ENCODE measurements at regions of chr11 and their contacts with region 1.

Region 1: DNA sequence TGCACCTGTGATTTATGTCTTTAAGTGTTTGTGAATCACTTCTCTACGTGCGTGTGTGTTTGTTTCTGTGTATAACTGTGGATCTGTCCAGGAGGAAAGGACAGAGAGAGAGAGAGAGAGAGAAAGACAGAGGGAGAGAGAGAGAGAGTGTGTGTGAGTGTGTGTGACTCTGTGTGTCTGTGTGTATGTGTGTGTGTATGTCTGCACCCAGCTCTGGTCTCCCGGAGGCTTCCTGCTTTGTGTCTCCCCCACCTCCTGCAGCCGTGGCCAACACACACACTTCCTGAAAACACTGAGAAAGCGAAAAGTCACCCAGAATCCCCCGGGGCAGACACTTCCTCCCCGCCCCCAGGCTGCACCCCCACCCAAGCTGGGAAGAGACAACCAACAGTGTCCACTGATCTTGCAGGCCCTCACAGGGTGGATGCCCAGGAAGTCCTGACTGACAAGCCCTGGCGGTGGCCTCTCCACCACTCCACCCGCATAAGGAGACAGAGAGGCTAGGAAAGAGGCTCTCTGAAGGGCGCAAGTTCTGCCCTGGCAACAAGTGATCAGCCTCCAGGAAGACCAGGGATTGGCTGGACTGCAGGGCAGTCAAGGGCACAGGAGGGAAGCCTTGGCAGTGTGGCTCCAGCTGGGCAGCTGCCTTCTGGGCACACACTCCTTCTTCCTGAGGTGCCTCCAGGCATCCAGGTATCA is 30.0 kb downstream of the ARAP1 start:
- DNase-seq: peak; percentile 93
- ATAC-seq: peak; percentile 92
- H3K4me3 Mint-ChIP-seq: peak overlapping the region; percentile 99
- H3K27ac Mint-ChIP-seq: peak overlapping the region; percentile 99
- H3K4me1 Mint-ChIP-seq: peaks cover 59% of the 10 kb centered on the region
- H3K27me3 Mint-ChIP-seq: no peaks in the 10 kb centered on the region

Region 2: GRCh38 chr11:72743321-72744221 is 21.4 kb after region 1 on chr11:
- CTCF ChIA-PET with region 1: interaction called, 13 read pairs
- DNase-seq: no peak
- ATAC-seq: no peak
- H3K4me3 Mint-ChIP-seq: no peak overlapping the region
- H3K27ac Mint-ChIP-seq: peak overlapping the region; percentile 20
- H3K4me1 Mint-ChIP-seq: peaks cover 53% of the 10 kb centered on the region
- H3K27me3 Mint-ChIP-seq: no peaks in the 10 kb centered on the region

Region 3: GRCh38 chr11:72787216-72788104 is 65.3 kb after region 1 on chr11:
- CTCF ChIA-PET with region 1: interaction called, 121 read pairs
- DNase-seq: no peak
- ATAC-seq: peak; percentile 46
- H3K4me3 Mint-ChIP-seq: no peak overlapping the region
- H3K27ac Mint-ChIP-seq: peak overlapping the region; percentile 83
- H3K4me1 Mint-ChIP-seq: peaks cover 24% of the 10 kb centered on the region
- H3K27me3 Mint-ChIP-seq: no peaks in the 10 kb centered on the region

Region 4: GRCh38 chr11:72814286-72815109 is 92.3 kb after region 1 on chr11 and contains the start of gene ATG16L2:
- CTCF ChIA-PET with region 1: interaction called, 63 read pairs
- DNase-seq: peak; percentile 92
- ATAC-seq: peak; percentile 75
- H3K4me3 Mint-ChIP-seq: peak within 1 kb of the TSS; percentile 100
- H3K27ac Mint-ChIP-seq: peak within 1 kb of the TSS; percentile 99
- H3K4me1 Mint-ChIP-seq: peaks cover 52% of the 10 kb centered on the region
- H3K27me3 Mint-ChIP-seq: no peaks in the 10 kb centered on the region
- total RNA-seq, gene ATG16L2: 103 to 168 TPM

Measured in activated CD8-positive, alpha-beta memory T cell treated with anti-CD3 and anti-CD28 coated beads, Interleukin-2, amount 10 ng/mL, durations not matched to agents 7 days and 5 days (primary cell).